IMR-90 (cell line): ENCODE measurements at regions of chr15 and their contacts with region 1.

Region 1: DNA sequence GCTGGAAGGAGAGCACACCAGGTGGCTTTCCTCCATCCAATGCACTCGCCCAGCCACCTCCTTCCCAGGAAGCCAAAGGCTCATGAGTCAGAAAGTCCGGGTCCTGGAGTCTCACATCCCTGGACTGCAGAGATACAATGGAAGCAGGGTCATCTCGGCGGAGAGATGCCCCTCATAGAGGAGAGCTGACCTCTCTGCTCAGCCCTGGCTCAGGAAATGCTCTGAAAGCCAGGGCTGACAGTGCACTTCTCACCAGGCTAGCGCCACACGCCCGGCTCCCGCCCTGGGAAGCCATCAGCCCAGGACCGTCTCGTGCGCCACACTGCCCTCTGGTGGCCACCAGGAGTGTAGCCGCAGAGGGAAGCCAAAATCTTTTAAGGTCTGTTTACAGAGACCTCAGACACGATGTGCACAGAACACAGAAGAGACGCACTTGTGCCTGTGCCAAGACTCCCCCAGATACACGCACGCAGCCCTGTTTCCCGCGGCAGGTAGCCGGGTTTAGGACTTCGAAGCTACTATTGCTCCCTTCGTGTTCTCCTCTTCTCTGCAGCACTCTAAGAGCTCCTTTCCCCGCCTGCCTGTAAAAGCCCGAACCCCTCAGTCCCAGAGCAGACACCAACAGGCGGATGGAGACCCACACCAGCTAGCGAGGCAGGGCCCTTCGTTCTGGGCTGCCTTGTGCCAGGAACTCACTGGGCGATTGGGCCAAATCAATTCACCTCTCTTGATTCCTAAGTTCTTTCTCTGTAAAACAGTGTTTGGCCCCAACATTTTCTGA is 9.7 kb downstream of the NTRK3 start:
- DNase-seq: peak; percentile 39
- ATAC-seq: peak; percentile 99
- H3K4me3 ChIP-seq: no peak overlapping the region
- H3K27ac ChIP-seq: no peak overlapping the region
- H3K4me1 ChIP-seq: no peaks in the 10 kb centered on the region
- H3K27me3 ChIP-seq: no peaks in the 10 kb centered on the region
- CTCF ChIP-seq: peak; percentile 88
- POLR2A ChIP-seq: no peak
- RAD21 ChIP-seq: peak; percentile 84

Region 2: DNA sequence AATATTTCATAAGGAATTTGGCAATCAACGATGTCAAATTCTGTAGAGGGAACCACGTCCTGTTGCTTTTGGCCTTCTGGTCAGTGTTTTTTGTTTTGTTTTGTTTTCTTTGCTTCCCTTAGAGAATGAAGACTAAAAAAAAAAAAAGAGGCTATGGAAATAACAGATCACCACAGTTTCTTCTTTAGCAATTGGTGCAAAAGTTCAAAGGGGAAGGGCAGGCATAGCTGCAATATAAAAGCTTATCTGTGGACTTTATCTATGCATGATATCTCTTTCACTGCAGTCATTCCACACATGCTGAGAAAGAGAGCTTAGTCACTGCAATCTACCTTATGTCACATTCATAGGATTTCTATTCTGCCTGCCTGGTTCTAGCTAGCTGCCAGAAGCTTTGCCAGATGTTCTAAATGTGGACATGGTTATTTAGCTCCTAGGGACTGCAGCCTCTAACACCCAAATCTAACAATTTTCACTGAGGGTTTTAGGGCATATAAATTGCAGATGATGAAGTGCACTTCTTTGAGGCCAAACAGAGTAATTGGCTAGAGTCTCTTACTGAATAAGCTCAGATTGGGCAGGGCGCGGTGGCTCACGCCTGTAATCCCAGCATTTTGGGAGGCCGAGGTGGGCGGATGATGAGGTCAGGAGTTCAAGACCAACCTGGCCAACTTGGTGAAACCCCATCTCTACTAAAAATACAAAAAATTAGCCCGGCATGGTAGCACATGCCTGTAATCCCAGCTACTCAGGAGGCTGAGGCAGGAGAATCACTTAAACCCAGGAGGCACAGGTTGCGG is 627.5 kb before region 1 on chr15:
- CTCF ChIA-PET with region 1: no interaction called
- POLR2A ChIA-PET with region 1: no interaction called
- dilution Hi-C with region 1: no loop called
- in situ Hi-C with region 1: no loop called
- intact Hi-C with region 1: loop called (anchors 5 kb)
- DNase-seq: peak; percentile 44
- ATAC-seq: peak; percentile 68
- H3K4me3 ChIP-seq: no peak overlapping the region
- H3K27ac ChIP-seq: no peak overlapping the region
- H3K4me1 ChIP-seq: no peaks in the 10 kb centered on the region
- H3K27me3 ChIP-seq: no peaks in the 10 kb centered on the region
- CTCF ChIP-seq: no peak
- POLR2A ChIP-seq: no peak
- RAD21 ChIP-seq: no peak

Region 3: DNA sequence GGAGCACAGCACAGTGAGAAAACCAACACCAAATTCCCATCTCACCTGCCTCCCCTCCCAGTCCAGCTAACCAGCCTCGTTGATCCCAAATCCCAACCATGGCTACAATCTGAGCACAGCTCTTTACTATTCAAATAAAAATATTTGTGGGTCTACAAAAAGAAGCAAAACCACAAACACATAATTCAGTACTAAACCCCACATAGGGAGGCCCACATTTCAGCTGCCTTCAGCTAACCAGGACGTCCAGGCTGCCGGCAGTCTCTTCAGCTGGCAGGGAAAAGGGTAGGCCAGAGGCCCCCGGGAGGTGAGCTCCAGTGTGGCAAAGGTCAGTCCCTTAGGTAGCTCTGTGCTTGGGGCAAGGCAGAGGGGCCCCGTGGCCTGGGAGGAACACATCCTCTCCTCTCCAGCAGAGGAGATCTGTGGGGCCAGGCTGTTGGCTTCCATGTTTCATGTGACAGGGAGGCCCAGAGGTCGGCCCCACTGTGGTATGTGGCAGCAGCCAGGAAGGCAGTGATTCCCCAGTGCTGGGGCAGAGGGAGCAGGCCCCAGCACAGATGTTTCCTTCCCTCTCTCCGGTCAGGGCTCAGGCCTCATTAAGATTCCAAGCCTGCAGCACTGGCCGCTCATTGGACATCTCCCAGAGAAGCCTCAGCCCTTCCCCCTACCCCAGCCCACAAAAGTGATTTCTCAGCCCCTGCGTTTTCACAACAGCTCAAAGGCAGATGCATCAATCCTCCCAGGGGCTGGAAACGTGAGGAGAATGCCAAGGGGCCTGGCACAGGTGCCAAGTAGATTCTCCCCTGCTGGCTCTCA is 371.8 kb before region 1 on chr15:
- CTCF ChIA-PET with region 1: no interaction called
- POLR2A ChIA-PET with region 1: no interaction called
- dilution Hi-C with region 1: no loop called
- in situ Hi-C with region 1: no loop called
- intact Hi-C with region 1: loop called (anchors 1 kb)
- DNase-seq: peak; percentile 65
- ATAC-seq: peak; percentile 66
- H3K4me3 ChIP-seq: no peak overlapping the region
- H3K27ac ChIP-seq: peak overlapping the region; percentile 51; the same call in 1 of the 2 replicates
- H3K4me1 ChIP-seq: peaks cover 34% of the 10 kb centered on the region
- H3K27me3 ChIP-seq: no peaks in the 10 kb centered on the region
- CTCF ChIP-seq: no peak
- POLR2A ChIP-seq: no peak
- RAD21 ChIP-seq: no peak

Region 4: DNA sequence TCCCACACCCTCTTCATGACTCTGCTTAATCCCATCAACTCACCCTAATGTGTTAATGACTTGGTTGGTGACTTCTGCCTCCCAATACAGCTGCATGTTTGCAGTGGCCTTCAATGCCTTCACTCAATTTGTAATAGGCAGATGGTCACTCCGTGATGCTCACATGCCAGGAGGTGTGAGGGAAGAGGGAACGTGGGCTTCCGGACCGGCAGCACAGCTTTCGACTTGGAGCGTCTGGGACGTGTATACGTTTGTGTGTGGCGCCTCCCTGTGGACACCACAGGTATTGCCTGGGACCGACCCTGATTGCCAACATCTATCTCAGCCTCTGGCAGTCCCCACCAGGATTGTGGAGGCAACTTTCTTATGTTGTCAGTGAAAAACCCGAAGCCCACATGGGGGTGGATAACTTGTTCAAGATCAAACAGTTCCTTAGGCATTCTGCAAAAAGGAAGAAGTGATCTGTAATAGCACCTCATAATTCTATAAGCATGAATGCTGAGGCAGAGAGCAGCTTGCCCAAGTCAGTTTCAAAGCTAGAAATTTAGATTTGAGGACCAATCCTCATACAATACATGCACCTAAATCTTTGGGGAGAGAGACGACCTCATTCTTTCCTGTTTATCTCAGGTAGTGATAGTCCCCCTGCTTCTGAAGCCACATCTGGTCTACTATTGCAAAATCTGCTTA is 203.4 kb after region 1 on chr15:
- CTCF ChIA-PET with region 1: no interaction called
- POLR2A ChIA-PET with region 1: no interaction called
- dilution Hi-C with region 1: no loop called
- in situ Hi-C with region 1: no loop called
- intact Hi-C with region 1: loop called (anchors 1 kb)
- DNase-seq: peak; percentile 66
- ATAC-seq: peak; percentile 71
- H3K4me3 ChIP-seq: no peak overlapping the region
- H3K27ac ChIP-seq: no peak overlapping the region
- H3K4me1 ChIP-seq: peaks cover 1% of the 10 kb centered on the region; the same call in 1 of the 2 replicates
- H3K27me3 ChIP-seq: peaks cover 8% of the 10 kb centered on the region
- CTCF ChIP-seq: peak; percentile 77
- POLR2A ChIP-seq: no peak
- RAD21 ChIP-seq: peak; percentile 84

Region 5: DNA sequence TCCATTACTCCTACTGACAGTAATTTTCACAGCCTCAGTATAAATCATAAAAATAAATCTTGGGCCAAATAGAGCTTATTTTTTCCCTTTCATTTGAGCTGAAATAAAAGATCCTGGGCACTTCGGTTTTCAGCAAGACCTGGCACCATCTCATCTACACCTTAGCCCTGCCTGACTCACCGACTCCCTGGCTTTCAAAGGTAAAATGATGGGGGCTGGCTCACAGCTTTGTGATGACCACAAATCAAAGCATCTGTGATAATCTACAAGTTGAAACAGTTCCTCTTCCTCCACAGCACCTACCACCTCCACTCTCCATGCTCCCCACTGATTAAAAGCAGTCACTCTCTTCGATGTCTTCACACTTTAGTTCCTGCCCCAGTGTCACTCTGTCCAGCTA is 272.0 kb after region 1 on chr15:
- CTCF ChIA-PET with region 1: no interaction called
- POLR2A ChIA-PET with region 1: no interaction called
- dilution Hi-C with region 1: no loop called
- in situ Hi-C with region 1: no loop called
- intact Hi-C with region 1: no loop called
- DNase-seq: no peak
- ATAC-seq: no peak
- H3K4me3 ChIP-seq: no peak overlapping the region
- H3K27ac ChIP-seq: no peak overlapping the region
- H3K4me1 ChIP-seq: no peaks in the 10 kb centered on the region
- H3K27me3 ChIP-seq: no peaks in the 10 kb centered on the region
- CTCF ChIP-seq: no peak
- POLR2A ChIP-seq: no peak
- RAD21 ChIP-seq: no peak